ENCODE measurements at regions of chr20 and their contacts with region 1.

Region 1: GRCh38 chr20:31670371-31671228 is 32.9 kb downstream of the COX4I2 start:
- DNase-seq: peak; percentile 68
- H3K4me3 ChIP-seq: no peak overlapping the region
- H3K27ac ChIP-seq: peak overlapping the region; percentile 75 to 91
- H3K4me1 ChIP-seq: peaks cover 31% of the 10 kb centered on the region
- H3K27me3 ChIP-seq: no peaks in the 10 kb centered on the region
- CTCF ChIP-seq: peak in 1 of 4 experiments; percentile 2
- POLR2A ChIP-seq: no peak

Region 2: GRCh38 chr20:31595654-31596411 is 74.8 kb before region 1 on chr20:
- intact Hi-C with region 1: no loop called
- DNase-seq: no peak
- H3K4me3 ChIP-seq: no peak overlapping the region
- H3K27ac ChIP-seq: peak overlapping the region; percentile 51 to 60
- H3K4me1 ChIP-seq: no peaks in the 10 kb centered on the region
- H3K27me3 ChIP-seq: no peaks in the 10 kb centered on the region
- CTCF ChIP-seq: no peak
- POLR2A ChIP-seq: peak; percentile 43

Region 3: GRCh38 chr20:31712564-31713311 is 42.1 kb after region 1 on chr20:
- intact Hi-C with region 1: loop called (anchors 2 kb)
- DNase-seq: peak; percentile 96
- H3K4me3 ChIP-seq: peak overlapping the region in 1 of 2 donors; percentile 8
- H3K27ac ChIP-seq: peak overlapping the region; percentile 94 to 96
- H3K4me1 ChIP-seq: peaks cover 39% of the 10 kb centered on the region
- H3K27me3 ChIP-seq: no peaks in the 10 kb centered on the region
- CTCF ChIP-seq: peak in 1 of 4 experiments; percentile 5
- POLR2A ChIP-seq: peak; percentile 33

Region 4: DNA sequence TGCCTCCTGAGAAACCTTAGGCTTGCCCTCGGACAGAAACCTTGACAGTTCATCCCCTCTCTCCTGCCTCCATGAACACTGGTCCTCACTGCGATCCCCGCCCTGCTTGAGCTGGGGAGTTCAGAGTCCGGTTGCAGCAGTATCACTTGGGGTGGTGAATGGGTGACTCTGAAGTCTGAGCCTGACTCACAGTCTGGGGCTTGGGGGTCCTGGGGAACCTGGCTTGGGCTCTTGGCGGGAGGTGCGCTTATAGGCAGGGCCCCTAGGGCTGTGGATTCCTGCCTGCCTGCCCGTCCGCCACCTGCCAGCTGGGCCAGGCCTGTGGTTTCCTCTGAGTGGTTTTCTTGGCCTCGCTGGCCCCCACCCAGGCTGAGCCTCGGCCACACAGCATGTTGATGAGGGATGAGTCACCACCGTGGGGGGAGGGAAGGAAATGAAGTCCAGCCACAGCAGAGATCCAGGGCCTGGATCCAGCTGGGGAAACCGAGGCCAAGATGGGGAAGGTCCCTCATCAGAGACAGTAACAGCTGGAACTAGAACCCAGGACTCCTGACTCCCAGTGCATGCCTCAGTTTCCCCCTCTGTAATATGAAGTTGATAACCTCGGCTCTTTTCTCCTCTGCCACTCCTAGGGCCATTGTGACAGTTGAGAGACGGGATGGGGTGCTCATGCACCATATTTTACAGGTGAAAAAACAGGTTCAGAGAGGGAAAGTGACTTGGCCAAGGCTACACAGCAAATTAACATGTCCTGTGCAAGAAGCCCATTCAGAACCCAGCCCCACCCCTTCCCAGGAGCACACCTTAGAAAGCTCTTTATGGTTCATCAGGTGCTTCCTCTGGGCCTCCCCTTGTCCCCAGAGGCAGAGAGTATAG is 165.6 kb after region 1 on chr20:
- intact Hi-C with region 1: no loop called
- DNase-seq: no peak
- H3K4me3 ChIP-seq: no peak overlapping the region
- H3K27ac ChIP-seq: no peak overlapping the region
- H3K4me1 ChIP-seq: no peaks in the 10 kb centered on the region
- H3K27me3 ChIP-seq: no peaks in the 10 kb centered on the region
- CTCF ChIP-seq: no peak
- POLR2A ChIP-seq: no peak